Mammary epithelial cell (primary cell): ENCODE measurements at regions of chr6 and their contacts with region 1.

Region 1: DNA sequence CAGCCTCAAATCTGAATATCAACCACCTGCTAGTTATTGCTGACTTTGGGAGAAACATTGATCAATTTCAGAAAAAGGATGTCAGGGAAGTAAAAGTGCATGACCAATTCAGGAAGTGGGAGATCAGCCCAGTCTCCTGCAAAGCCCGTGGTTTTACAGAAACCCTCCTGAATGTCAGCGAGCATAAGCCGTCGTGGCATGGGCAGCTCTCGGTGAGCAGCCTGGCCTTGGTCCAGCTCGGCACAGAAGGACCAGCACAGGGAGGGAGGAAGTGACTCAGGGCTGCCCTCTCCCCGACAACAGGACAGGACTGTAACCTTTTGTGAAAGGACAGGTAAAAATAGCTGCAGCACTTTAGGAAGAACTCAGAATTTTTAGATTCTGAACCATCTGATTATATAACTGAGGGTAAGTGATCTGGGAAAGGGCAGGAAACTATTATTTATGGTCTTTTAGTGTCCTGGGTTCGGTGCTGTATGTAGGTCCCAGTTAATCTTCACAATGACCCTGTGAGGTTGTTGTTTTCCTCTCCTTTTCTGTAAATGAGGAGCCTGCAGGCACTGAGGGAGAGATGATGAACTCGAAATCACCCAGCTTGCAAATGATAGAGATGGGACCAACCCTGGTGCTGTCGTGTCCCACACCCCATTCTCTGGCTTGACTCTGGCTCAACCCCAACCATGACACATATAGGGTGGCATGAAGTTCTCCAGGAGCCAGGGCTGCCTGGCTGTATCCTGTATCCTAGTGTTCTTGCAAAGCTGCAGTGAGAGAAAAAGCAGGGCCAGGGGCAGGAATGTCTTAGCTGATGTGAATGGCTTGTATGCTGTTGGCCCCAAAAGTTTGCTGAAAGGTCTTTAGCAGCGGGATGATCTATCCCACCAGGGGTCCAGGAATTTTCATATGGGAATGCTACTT is 37.6 kb downstream of the NRN1 start:
- DNase-seq: peak; percentile 67
- H3K4me3 ChIP-seq: no peak overlapping the region
- H3K27ac ChIP-seq: no peak overlapping the region
- H3K4me1 ChIP-seq: peaks cover 18% of the 10 kb centered on the region
- H3K27me3 ChIP-seq: no peaks in the 10 kb centered on the region
- CTCF ChIP-seq: no peak

Region 2: GRCh38 chr6:5899216-5900045 is 69.6 kb before region 1 on chr6:
- CTCF ChIA-PET with region 1: no interaction called
- dilution Hi-C with region 1: loop called (anchors 5 kb)
- in situ Hi-C with region 1: no loop called
- intact Hi-C with region 1: no loop called
- DNase-seq: no peak
- H3K4me3 ChIP-seq: no peak overlapping the region
- H3K27ac ChIP-seq: no peak overlapping the region
- H3K4me1 ChIP-seq: no peaks in the 10 kb centered on the region
- H3K27me3 ChIP-seq: peaks cover 2% of the 10 kb centered on the region
- CTCF ChIP-seq: no peak

Region 3: DNA sequence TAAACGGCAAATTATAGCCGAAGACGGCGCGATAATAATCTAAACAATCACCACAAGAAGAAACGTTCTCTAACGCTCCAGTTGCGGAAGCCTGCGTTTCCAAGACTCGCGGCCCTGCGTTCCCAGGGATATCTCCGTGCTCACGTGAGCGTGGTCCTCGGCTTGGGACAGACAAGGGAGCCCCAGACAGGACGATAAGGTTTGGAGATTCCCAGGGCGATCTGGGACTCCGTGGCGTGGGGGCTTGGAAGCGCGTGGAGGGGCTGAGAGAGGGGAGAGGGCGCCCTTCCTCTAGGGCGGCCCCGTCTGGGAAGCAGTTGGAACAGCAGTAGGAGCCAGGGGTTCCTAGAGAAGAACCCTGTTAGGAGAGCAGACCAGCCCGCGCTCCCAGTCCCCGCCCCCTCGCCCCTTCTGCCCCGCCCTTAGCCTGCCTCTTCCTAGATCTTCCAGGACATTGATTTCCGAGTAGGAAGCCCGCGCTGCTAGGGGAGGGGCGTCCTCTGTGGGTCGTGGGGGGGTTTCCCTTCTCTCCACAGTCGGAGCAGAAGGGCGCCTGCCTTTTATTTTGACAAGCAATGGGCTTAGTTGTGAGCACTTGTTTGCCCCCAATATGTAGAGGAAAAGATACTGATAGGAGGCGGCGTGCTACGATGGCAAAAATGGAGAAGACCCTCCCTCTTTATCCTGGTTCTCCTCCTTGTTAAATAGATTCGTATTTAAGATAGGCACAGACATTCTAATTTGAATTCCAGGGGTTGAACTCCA is 27.1 kb after region 1 on chr6:
- CTCF ChIA-PET with region 1: interaction called, 4 read pairs
- dilution Hi-C with region 1: no loop called
- in situ Hi-C with region 1: no loop called
- intact Hi-C with region 1: loop called (anchors 2 kb)
- DNase-seq: peak; percentile 58
- H3K4me3 ChIP-seq: peak overlapping the region; percentile 57 to 75 (median 68)
- H3K27ac ChIP-seq: no peak overlapping the region
- H3K4me1 ChIP-seq: peaks cover 14% of the 10 kb centered on the region
- H3K27me3 ChIP-seq: peaks cover 51% of the 10 kb centered on the region
- CTCF ChIP-seq: peak in 1 of 2 donors; percentile 29

Region 4: GRCh38 chr6:6331946-6332601 is 363.0 kb after region 1 on chr6:
- CTCF ChIA-PET with region 1: no interaction called
- dilution Hi-C with region 1: no loop called
- in situ Hi-C with region 1: no loop called
- intact Hi-C with region 1: no loop called
- DNase-seq: no peak
- H3K4me3 ChIP-seq: no peak overlapping the region
- H3K27ac ChIP-seq: no peak overlapping the region
- H3K4me1 ChIP-seq: no peaks in the 10 kb centered on the region
- H3K27me3 ChIP-seq: no peaks in the 10 kb centered on the region
- CTCF ChIP-seq: no peak